Dorsolateral prefrontal cortex (tissue), 120 donors: ENCODE measurements at regions of chr3 and their contacts with region 1.

Region 1: GRCh38 chr3:169149349-169149890 is 514.1 kb downstream of the MECOM start:
- DNase-seq: peak; percentile 64 to 85 (median 72)
- H3K4me3 ChIP-seq: peak overlapping the region in 40 of 59 donors; percentile 1 to 54 (median 31)
- H3K27ac ChIP-seq: peak overlapping the region in 7 of 59 donors; percentile 12 to 54 (median 42)
- H3K27me3 ChIP-seq: peaks cover 11 to 78% (median 55%) of the 10 kb centered on the region in 45 donors
- CTCF ChIP-seq: peak; percentile 56 to 92 (median 84)

Region 2: DNA sequence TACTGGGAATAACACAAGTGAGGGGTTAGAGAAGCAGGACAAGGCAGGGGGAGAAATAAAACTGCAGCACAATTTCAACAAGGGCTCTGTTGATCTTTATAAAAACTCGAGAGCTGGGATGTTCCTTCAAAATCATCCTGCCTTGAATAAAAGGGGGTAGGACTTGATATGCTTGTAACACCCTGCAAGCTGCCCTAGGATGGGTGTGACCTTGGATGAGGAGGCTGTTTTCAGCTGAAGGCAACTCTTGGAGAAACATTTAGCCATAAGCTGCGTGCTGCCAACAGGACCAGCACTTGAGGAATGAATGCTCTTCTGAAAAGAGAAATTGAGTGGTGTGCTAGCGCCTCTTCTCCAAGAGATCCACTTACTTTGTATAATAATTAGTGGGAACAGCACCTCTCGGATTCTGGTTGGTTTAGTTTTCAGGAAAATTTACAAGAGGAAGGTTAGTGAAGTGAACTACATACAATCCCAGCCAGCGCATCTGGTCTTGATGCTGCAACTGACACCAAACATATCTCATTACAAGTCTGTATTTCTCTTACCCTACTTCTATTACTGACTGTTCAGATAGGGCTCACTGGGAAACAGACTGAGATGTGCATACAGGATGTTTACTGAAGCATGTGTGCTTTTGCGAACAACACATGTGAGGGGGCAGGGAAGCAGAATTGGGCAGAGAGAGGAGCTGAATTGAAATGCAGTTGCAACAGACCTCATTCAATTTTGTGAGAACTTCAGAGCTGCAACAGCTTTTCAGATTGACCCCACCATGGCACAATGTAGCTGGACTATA is 410.7 kb before region 1 on chr3:
- intact Hi-C with region 1: no loop called
- DNase-seq: no peak
- H3K4me3 ChIP-seq: no peak overlapping the region
- H3K27ac ChIP-seq: no peak overlapping the region
- H3K27me3 ChIP-seq: no peaks in the 10 kb centered on the region
- CTCF ChIP-seq: no peak

Region 3: DNA sequence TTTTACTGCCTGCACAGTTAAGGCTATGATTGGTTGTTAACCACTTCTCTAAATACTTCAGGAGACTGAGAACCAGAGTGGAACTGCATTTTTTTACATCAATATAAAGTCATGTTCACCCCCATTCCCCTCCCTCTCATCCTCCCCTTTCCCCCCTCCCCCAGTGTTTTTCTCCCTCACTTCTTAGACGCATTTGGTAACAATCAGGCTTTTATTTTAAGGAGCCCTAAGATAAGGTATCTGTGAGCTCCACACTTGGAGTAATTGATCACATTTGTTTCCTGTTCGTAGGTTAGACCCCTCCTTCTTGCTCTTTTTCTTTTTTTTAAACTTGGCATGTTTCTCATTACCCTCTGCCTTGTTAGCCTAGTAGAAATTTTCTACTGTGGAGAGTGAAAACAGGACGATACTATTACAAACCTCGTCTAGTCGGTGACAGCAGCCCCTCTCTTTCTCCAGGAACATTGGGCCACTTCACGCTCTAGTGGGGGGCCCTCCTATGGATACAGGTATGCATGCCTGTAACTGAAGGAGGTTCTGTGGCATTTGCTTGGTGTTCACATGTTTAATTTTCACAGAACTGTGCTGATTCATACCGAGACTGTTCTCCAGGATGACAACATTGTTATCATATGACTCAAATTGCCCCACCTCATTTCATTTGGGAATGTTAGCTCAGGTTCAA is 199.7 kb after region 1 on chr3:
- intact Hi-C with region 1: loop called (anchors 5 kb)
- DNase-seq: no peak
- H3K4me3 ChIP-seq: no peak overlapping the region
- H3K27ac ChIP-seq: no peak overlapping the region
- H3K27me3 ChIP-seq: peaks cover 0 to 43% (median 8%) of the 10 kb centered on the region in 45 donors
- CTCF ChIP-seq: no peak

Region 4: DNA sequence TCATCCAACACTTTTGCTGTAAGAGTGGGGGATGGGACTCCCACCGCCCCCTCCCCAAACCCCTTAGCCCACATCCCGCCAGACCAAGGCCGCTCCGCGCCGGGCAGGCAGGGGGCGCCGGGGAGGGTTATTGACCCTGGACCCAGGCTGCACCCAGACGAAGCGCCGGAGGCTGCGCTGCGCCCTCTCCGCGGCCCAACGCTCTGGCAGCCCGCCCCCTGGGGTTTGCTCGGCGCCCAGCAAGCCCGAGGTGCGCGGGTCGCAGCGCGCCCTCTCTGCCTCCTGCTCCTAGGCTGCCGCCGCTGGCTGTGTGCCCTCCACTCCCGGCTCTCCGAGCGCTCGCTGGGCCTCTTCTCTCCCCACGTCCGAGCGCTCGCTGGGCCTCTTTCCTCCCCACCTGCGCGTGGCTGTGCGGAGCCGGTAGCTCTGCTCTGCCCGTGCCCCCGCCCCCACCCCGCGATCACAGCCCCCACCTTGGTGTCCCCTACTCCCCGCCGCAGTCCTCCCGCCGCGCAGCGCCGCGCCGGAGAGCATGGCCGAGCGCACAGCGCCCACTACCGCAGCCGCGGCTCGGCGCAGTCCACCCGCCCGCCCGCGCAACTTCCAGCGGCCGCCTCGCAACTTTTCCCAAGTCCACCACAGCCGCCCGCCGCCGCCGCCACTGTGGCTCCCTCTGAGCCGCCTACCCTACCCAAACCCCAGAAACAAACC is 512.9 kb after region 1 on chr3:
- intact Hi-C with region 1: loop called (anchors 5 kb)
- DNase-seq: peak in 4 of 10 donors; percentile 37 to 58 (median 44)
- H3K4me3 ChIP-seq: peak overlapping the region; percentile 43 to 77 (median 64)
- H3K27ac ChIP-seq: peak overlapping the region in 42 of 59 donors; percentile 3 to 86 (median 58)
- H3K27me3 ChIP-seq: peaks cover 24 to 100% (median 94%) of the 10 kb centered on the region in 45 donors
- CTCF ChIP-seq: peak in 49 of 56 donors; percentile 11 to 71 (median 46)

Region 5: GRCh38 chr3:169764452-169765274 is 615.2 kb after region 1 on chr3 and contains the start of gene TERC:
- intact Hi-C with region 1: loop called in 1 of 2 experiments (anchors 5 kb)
- DNase-seq: peak; percentile 81 to 96 (median 91)
- H3K4me3 ChIP-seq: peak within 1 kb of the TSS; percentile 63 to 98 (median 89)
- H3K27ac ChIP-seq: peak within 1 kb of the TSS; percentile 86 to 100 (median 97)
- H3K27me3 ChIP-seq: no peaks in the 10 kb centered on the region
- CTCF ChIP-seq: peak in 14 of 56 donors; percentile 4 to 28 (median 12)
- total RNA-seq, gene TERC: 1.6 to 15.3 (median 4.5) TPM in 78 of 120 experiments, not detected in the others